Activated CD4-positive, alpha-beta memory T cell treated with anti-CD3 and anti-CD28 coated beads for 36 hours (primary cell): ENCODE measurements at regions of chr3 and their contacts with region 1.

Region 1: DNA sequence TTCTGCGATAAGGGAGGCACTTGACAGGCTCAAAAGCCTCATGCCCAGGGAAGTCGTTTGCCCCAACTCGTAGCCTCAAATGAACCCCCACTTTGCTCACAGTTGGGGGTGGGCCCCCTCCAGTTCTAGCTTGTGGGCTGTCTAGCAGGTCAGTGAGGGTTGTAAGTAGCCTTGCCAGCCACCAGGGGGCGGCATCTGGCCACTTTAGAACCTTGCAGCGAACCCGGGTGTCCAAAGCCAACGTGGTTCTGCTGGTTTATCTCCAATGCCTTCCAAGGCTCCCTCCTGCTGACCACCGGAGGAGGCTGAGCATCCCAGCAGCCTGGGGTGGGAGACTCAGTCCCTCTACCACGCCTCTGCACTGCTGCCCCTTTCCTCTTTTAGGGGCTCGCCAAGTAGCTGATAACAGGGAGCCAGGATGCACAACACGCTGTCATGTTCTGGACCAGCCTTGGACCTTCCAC is 9.2 kb upstream of the RBSN start:
- DNase-seq: peak; percentile 80
- H3K4me3 Mint-ChIP-seq: peak overlapping the region; percentile 5
- H3K27ac Mint-ChIP-seq: no peak overlapping the region
- H3K4me1 Mint-ChIP-seq: no peaks in the 10 kb centered on the region
- H3K27me3 Mint-ChIP-seq: peaks cover 6% of the 10 kb centered on the region

Region 2: GRCh38 chr3:14962762-14963161 is 145.4 kb before region 1 on chr3:
- CTCF ChIA-PET with region 1: no interaction called
- POLR2A ChIA-PET with region 1: no interaction called
- intact Hi-C with region 1: no loop called
- DNase-seq: no peak
- H3K4me3 Mint-ChIP-seq: no peak overlapping the region
- H3K27ac Mint-ChIP-seq: no peak overlapping the region
- H3K4me1 Mint-ChIP-seq: peaks cover 26% of the 10 kb centered on the region
- H3K27me3 Mint-ChIP-seq: no peaks in the 10 kb centered on the region

Region 3: DNA sequence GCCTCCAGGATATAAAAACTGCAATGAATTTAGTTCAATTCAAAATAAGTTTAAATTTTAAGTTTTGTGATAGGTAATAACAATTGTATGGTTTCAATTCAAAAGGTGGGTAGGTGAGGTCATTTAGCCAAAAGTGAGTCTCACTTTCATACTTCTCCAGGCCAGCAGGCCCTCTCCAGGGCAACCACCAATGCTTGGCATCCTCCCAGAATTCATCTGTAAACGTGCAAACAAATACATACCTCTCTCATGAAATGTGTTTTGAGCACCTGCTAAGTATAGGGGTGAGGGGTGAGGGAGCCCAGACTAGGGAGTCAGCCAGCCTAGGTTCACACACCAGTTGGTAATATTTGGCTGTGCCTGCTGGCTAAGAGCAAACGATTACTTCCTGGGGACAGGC is 12.9 kb after region 1 on chr3:
- CTCF ChIA-PET with region 1: interaction called, 65 read pairs
- POLR2A ChIA-PET with region 1: interaction called, 6 read pairs
- intact Hi-C with region 1: no loop called
- DNase-seq: no peak
- H3K4me3 Mint-ChIP-seq: no peak overlapping the region
- H3K27ac Mint-ChIP-seq: no peak overlapping the region
- H3K4me1 Mint-ChIP-seq: peaks cover 4% of the 10 kb centered on the region
- H3K27me3 Mint-ChIP-seq: peaks cover 1% of the 10 kb centered on the region

Region 4: DNA sequence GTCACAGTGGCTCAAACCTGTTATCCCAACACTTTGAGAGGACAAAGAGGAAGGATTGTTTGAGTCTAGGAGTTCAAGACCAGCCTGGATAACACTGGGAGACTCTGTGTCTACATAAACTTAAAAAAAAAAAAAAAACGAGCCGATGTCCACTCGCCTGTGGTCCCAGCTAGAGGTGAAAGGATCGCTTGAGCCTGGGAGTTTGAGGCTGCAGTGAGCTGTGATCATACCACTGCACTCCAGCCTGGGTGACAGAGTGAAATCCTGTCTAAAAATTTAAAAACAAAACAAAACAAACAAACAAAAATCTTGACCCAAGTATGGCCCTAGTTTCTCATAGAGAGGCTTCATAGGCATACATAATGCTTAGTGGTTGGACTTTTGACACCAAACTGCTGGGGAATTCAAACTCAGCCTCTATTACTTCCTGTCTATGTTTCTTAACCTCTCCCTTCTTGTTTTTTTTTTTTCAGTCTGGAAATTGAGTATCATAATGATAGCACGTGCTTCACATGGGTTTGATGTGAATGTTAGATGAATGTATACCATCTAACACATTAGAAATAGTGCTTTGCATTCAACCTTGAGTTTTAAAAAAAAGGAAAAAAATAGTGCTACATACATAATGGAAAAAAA is 51.5 kb after region 1 on chr3:
- CTCF ChIA-PET with region 1: no interaction called
- POLR2A ChIA-PET with region 1: no interaction called
- intact Hi-C with region 1: no loop called
- DNase-seq: no peak
- H3K4me3 Mint-ChIP-seq: no peak overlapping the region
- H3K27ac Mint-ChIP-seq: no peak overlapping the region
- H3K4me1 Mint-ChIP-seq: peaks cover 7% of the 10 kb centered on the region
- H3K27me3 Mint-ChIP-seq: peaks cover 13% of the 10 kb centered on the region

Region 5: GRCh38 chr3:15199493-15200105 is 91.5 kb after region 1 on chr3:
- CTCF ChIA-PET with region 1: interaction called, 45 read pairs
- POLR2A ChIA-PET with region 1: no interaction called
- intact Hi-C with region 1: no loop called
- DNase-seq: peak; percentile 36
- H3K4me3 Mint-ChIP-seq: no peak overlapping the region
- H3K27ac Mint-ChIP-seq: no peak overlapping the region
- H3K4me1 Mint-ChIP-seq: peaks cover 19% of the 10 kb centered on the region
- H3K27me3 Mint-ChIP-seq: no peaks in the 10 kb centered on the region